Endothelial cell of umbilical vein (primary cell): ENCODE measurements at regions of chr9 and their contacts with region 1.

Region 1: DNA sequence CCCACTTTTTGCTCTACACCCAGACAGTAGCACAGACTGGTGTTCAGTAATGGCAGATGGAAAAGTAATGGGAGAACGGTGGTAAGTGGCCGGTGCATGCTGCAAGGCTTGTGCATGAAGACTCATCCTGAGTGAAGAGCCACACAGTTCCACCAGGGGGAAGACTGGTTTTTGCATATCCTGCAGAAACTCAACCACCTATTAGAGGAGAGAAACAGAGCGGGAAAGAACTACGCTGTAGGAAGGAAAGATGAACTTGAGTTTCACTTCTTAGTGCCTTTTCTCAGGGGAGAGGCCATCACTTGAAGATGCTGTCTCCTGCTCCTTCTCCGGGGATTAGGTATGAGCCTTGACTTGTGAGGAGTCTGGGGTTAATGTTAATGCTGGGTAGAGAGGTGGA is 9.4 kb upstream of the PRSS3 start:
- DNase-seq: no peak
- H3K4me3 ChIP-seq: no peak overlapping the region
- H3K27ac ChIP-seq: no peak overlapping the region
- H3K4me1 ChIP-seq: peaks cover under 1% of the 10 kb centered on the region
- H3K27me3 ChIP-seq: no peaks in the 10 kb centered on the region
- CTCF ChIP-seq: peak in 1 of 2 donors; percentile 13
- POLR2A ChIP-seq: no peak

Region 2: GRCh38 chr9:33852216-33852826 is 66.4 kb after region 1 on chr9:
- CTCF ChIA-PET with region 1: interaction called, 6 read pairs
- POLR2A ChIA-PET with region 1: no interaction called
- dilution Hi-C with region 1: no loop called
- intact Hi-C with region 1: loop called (anchors 1 kb)
- DNase-seq: peak; percentile 77
- H3K4me3 ChIP-seq: no peak overlapping the region
- H3K27ac ChIP-seq: no peak overlapping the region
- H3K4me1 ChIP-seq: peaks cover 22% of the 10 kb centered on the region
- H3K27me3 ChIP-seq: no peaks in the 10 kb centered on the region
- CTCF ChIP-seq: peak; percentile 33 to 45
- POLR2A ChIP-seq: no peak